ENCODE measurements at regions of chr3 and their contacts with region 1.

Region 1: DNA sequence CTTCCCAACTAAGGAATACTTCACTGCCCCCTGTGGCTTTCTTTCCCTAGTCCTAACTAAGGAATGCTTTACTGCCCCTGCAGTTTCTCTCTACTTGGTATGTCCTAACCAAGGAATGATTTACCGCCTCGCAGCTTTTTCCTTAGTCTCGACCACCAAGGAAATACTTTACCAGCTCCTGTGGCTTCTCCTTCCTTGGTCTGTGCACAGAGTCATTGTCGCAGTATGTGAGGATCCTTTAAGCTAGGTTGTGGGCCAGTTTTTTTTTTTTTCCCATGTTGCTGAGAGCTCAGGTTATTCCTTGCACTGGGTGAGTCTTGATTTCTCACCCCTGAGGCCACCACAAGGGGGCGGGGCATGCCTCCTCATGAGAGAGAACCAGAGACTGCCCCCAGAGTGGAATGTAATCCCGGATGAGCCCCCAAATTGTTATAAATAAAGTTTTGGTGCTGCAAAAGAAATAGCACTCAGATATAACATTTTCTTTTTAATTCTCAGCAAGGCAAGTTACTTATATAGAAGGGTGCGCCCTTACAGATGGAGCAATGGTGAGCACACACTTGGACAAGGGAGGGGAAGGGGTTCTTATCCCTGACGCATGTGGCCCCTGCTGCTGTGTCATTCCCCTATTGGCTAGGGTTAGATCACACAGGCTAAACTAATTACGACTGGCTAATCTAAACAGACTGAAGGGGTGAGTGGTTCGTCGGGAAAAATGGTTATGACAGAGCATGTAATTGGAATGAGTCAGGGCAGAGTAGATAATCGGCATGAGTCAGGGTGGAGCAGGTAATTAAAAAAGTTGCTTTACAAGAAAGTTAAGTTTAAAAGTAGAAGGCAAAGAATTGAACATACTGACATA is 27.0 kb downstream of the NDUFB4 start:
- DNase-seq: peak; percentile 25 to 77 (median 44)
- ATAC-seq: peak; percentile 92
- H3K4me3 ChIP-seq: no peak overlapping the region
- H3K27ac ChIP-seq: peak overlapping the region; percentile 70; the same call in 2 of the 3 replicates
- H3K4me1 ChIP-seq: peaks cover 0 to 9% of the 10 kb centered on the region in 2 experiments; a peak in 3 of 5 replicates
- H3K27me3 ChIP-seq: no peaks in the 10 kb centered on the region
- CTCF ChIP-seq: peak; percentile 57 to 65 (median 60)
- EP300 ChIP-seq: no peak; the same call in 1 of the 2 replicates
- POLR2A ChIP-seq: no peak
- RAD21 ChIP-seq: peak; percentile 69 to 73

Region 2: DNA sequence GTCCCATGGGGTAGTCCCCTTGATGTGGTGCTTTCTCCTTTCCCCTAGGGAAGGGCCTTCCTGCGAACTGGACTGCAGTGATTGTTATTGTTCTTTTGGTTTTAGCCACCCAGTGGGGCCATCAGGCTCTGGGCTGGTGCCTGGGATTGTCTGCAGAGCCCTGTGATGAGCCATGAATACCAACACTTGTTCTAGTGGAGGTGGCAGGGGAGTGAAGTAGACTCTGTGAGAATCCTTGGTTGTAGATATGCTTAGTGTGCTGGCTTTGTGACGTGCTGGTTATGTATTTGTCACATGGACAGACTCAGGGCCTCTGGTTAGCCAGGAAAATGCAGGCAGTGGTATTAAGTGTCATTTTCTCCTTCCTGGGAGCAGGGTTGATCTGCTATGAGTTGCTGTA is 78.7 kb before region 1 on chr3:
- CTCF ChIA-PET with region 1: no interaction called
- POLR2A ChIA-PET with region 1: no interaction called
- in situ Hi-C with region 1: no loop called
- intact Hi-C with region 1: no loop called
- DNase-seq: no peak
- ATAC-seq: no peak
- H3K4me3 ChIP-seq: no peak overlapping the region
- H3K27ac ChIP-seq: no peak overlapping the region
- H3K4me1 ChIP-seq: no peaks in the 10 kb centered on the region
- H3K27me3 ChIP-seq: no peaks in the 10 kb centered on the region
- CTCF ChIP-seq: no peak
- EP300 ChIP-seq: no peak
- POLR2A ChIP-seq: no peak
- RAD21 ChIP-seq: no peak

Region 3: DNA sequence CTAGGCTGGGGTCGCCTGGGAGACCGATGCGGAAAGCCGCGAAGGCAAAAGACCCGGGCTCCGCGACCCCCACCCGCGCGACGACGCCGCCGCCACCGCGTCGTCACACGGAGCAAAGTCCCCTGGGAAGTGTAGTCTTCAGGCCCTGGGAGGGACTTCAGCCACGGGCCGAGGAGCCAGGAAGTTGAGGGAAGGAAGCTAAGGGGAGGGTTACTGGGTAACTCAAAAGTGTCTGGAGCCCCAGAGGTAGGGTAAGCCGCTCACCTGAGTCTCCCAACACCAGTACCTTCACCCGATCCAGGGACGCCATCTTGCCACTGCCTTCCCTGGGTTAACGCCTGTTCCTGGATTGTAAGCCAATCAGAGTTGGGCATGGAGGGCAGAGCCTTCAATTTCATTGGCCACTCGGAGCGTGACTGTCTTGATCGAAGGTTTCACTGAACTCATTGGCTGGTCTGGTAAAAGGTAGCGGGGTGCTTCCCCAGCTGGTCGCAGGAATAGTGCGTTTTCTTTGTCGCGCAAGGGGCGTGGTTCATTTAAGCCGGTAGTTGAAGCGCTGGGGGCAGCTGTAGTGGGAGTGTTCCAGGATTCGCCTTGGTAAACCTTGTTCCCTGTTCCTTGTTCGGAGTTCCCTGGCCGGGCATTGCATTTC is 119.2 kb after region 1 on chr3 and contains the starts of genes GTF2E1 and RABL3:
- CTCF ChIA-PET with region 1: no interaction called
- POLR2A ChIA-PET with region 1: no interaction called
- in situ Hi-C with region 1: no loop called
- intact Hi-C with region 1: loop called (anchors 2 kb)
- DNase-seq: peak; percentile 87 to 96 (median 92)
- ATAC-seq: peak; percentile 99
- H3K4me3 ChIP-seq: peak within 1 kb of the TSS; percentile 98
- H3K27ac ChIP-seq: peak within 1 kb of the TSS; percentile 100
- H3K4me1 ChIP-seq: no peaks in the 10 kb centered on the region; a peak in 2 of 5 replicates
- H3K27me3 ChIP-seq: no peaks in the 10 kb centered on the region
- CTCF ChIP-seq: no peak
- EP300 ChIP-seq: no peak
- POLR2A ChIP-seq: peak; percentile 81
- RAD21 ChIP-seq: 0 out of 4 replicates have a peak, but pooled peaks of 1 of the 2 experiments have one; percentile 8
- polyA plus RNA-seq, gene GTF2E1: 12.9 to 15.4 TPM
- polyA plus RNA-seq, gene RABL3: 21.5 to 30.7 TPM